Naive thymus-derived CD8-positive, alpha-beta T cell (primary cell): ENCODE measurements at regions of chr2 and their contacts with region 1.

Region 1: GRCh38 chr2:99337113-99338028 is at the start of gene EIF5B:
- DNase-seq: peak; percentile 80 to 96 (median 86)
- ATAC-seq: peak; percentile 69 to 78
- H3K4me3 Mint-ChIP-seq: no peak within 1 kb of the TSS
- H3K27ac Mint-ChIP-seq: no peak within 1 kb of the TSS
- H3K4me1 Mint-ChIP-seq: peaks cover 16 to 59% (median 45%) of the 10 kb centered on the region in 4 donors
- H3K27me3 Mint-ChIP-seq: no peaks in the 10 kb centered on the region
- polyA plus RNA-seq, gene EIF5B: 3.0 to 12.6 (median 5.9) TPM

Region 2: DNA sequence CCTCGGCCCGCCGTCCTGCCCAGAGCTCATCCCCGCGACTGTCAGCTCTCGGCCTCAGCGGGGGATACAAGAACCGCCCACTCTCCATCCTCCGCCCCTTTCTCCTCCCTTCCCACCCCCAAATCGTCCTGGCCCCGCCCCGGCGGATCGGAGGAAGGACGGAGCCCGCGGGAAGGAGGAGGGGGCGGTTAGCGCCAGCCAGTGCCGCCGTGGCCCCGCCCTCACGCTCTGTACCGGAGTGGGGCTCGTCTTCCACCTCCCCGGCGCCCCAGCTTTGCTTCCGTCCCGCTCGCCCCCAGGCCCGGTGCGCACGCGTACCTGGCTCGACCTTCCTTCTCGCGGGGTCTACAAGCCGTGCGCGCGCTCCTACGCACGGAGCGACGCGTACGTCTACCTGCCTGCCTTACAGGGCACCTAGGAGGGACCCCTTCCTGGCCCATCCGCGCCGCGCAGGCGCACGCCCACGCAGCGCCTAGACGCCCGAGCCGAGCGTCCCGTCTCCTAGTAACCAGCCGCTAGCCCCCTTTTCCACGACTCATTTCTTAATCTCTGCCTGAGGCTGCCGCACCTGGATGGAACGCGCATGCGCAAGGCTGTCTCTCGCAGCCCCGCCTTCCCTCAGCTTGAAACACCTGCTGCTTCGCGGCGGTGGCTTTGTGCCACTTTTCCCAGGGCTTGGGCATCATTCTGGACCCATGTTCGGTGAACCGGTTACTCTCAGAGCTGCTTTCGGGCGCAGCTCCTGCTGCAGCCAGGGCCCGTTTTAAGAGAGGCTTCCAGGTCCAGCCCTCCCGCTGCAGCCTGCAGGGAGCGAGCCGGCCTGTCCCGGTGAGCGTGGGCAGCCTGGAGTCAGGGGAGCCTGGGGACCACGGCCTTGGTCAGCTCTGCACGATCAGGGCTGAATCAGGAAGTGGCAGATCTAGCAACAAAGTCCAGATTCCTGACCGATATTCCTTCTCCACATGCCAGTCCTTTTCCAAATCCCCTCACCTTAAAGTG is 196.0 kb before region 1 on chr2 and contains the start of gene C2orf15:
- POLR2A ChIA-PET with region 1: interaction called, 25 read pairs
- DNase-seq: peak; percentile 94 to 98 (median 98)
- ATAC-seq: peak; percentile 86 to 89
- H3K4me3 Mint-ChIP-seq: peak within 1 kb of the TSS; percentile 92 to 99 (median 97)
- H3K27ac Mint-ChIP-seq: peak within 1 kb of the TSS; percentile 96 to 99 (median 99)
- H3K4me1 Mint-ChIP-seq: peaks cover 10 to 29% (median 26%) of the 10 kb centered on the region in 4 donors
- H3K27me3 Mint-ChIP-seq: no peaks in the 10 kb centered on the region
- polyA plus RNA-seq, gene C2orf15: 6.1 to 6.8 (median 6.7) TPM

Region 3: GRCh38 chr2:99154643-99155536 is 182.5 kb before region 1 on chr2 and contains the starts of genes LIPT1 and TSGA10:
- POLR2A ChIA-PET with region 1: interaction called, 23 read pairs
- DNase-seq: peak; percentile 89 to 96 (median 92)
- ATAC-seq: peak; percentile 91 to 92
- H3K4me3 Mint-ChIP-seq: peak within 1 kb of the TSS in 3 of 10 donors; percentile 88 to 94 (median 89)
- H3K27ac Mint-ChIP-seq: peak within 1 kb of the TSS in 1 of 10 donors; percentile 96
- H3K4me1 Mint-ChIP-seq: peaks cover 14 to 41% (median 24%) of the 10 kb centered on the region in 4 donors
- H3K27me3 Mint-ChIP-seq: no peaks in the 10 kb centered on the region
- polyA plus RNA-seq, gene LIPT1: 19.0 to 26.9 (median 22.0) TPM
- polyA plus RNA-seq, gene TSGA10: 22.5 to 26.4 (median 24.1) TPM

Region 4: GRCh38 chr2:99180755-99181623 is 156.4 kb before region 1 on chr2 and contains the starts of genes MITD1 and MRPL30:
- POLR2A ChIA-PET with region 1: interaction called, 24 read pairs
- DNase-seq: peak; percentile 77 to 94 (median 92)
- ATAC-seq: peak; percentile 94 to 96
- H3K4me3 Mint-ChIP-seq: peak within 1 kb of the TSS; percentile 92 to 100 (median 99)
- H3K27ac Mint-ChIP-seq: peak within 1 kb of the TSS; percentile 99 to 100 (median 99)
- H3K4me1 Mint-ChIP-seq: peaks cover 32 to 73% (median 66%) of the 10 kb centered on the region in 4 donors
- H3K27me3 Mint-ChIP-seq: no peaks in the 10 kb centered on the region
- polyA plus RNA-seq, gene MITD1: 40.4 to 49.0 (median 43.8) TPM
- polyA plus RNA-seq, gene MRPL30: 19.1 to 23.5 (median 20.4) TPM

Region 5: DNA sequence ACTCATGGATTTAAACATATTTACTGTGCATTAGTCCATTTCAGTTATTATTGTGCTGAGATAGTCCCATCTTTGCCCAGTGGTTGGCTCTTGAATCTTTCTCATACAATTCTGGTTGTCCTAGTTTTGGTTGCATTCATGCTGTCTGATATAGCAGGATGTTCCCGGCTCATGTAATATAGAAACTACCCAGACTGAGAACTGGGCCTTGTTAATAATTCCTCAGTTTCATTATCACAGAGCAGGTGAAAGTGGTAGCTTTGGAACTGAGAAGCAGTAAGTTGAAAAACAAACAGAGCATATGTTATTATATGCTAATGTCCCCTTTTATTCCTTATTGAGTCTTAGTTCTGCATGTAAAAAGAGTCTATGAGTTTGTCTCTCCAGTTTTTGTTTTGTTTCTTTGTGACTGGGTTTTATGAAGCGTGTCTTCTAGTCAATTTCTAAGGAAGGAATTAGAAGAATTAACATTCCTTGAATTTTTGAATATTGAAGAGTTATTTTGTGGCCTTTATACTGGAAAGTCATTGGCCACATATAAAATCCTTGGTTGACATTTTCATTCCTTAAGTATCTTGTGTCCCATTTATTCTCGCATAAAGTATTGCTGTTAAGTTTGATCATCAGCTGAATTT is 43.1 kb after region 1 on chr2:
- POLR2A ChIA-PET with region 1: no interaction called
- DNase-seq: no peak
- ATAC-seq: no peak
- H3K4me3 Mint-ChIP-seq: no peak overlapping the region
- H3K27ac Mint-ChIP-seq: peak overlapping the region in 5 of 10 donors; percentile 2 to 24 (median 14)
- H3K4me1 Mint-ChIP-seq: peaks cover 0 to 2% (median 0%) of the 10 kb centered on the region in 4 donors
- H3K27me3 Mint-ChIP-seq: no peaks in the 10 kb centered on the region

Region 6: DNA sequence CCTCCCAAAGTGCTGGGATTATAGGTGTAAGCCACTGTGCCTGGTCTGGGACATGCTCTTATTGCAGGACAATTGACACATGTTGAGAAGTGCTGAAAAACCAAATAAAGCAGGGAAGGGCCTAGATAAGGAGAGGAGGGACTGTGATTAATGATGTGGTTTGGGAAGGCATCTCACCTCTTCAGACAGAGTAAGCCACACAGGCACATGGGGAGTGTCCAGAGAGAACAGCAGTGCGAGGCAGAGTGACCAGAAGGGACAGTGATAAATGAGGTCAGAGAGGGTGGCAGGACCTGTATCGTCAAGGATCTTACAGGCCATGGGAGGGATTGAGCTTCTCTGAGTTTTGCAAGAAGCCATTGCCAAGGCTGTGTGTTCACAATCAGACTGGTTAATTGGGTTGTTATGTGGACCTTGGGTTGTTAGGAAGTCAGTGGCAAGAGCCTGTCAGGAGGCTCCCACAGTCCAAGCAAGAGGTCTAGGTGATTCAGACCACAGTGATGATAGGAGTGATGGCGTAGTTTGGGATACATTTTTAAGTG is 58.3 kb after region 1 on chr2:
- POLR2A ChIA-PET with region 1: no interaction called
- DNase-seq: no peak
- ATAC-seq: no peak
- H3K4me3 Mint-ChIP-seq: no peak overlapping the region
- H3K27ac Mint-ChIP-seq: peak overlapping the region in 9 of 10 donors; percentile 34 to 89 (median 58)
- H3K4me1 Mint-ChIP-seq: no peaks in the 10 kb centered on the region
- H3K27me3 Mint-ChIP-seq: no peaks in the 10 kb centered on the region

Region 7: DNA sequence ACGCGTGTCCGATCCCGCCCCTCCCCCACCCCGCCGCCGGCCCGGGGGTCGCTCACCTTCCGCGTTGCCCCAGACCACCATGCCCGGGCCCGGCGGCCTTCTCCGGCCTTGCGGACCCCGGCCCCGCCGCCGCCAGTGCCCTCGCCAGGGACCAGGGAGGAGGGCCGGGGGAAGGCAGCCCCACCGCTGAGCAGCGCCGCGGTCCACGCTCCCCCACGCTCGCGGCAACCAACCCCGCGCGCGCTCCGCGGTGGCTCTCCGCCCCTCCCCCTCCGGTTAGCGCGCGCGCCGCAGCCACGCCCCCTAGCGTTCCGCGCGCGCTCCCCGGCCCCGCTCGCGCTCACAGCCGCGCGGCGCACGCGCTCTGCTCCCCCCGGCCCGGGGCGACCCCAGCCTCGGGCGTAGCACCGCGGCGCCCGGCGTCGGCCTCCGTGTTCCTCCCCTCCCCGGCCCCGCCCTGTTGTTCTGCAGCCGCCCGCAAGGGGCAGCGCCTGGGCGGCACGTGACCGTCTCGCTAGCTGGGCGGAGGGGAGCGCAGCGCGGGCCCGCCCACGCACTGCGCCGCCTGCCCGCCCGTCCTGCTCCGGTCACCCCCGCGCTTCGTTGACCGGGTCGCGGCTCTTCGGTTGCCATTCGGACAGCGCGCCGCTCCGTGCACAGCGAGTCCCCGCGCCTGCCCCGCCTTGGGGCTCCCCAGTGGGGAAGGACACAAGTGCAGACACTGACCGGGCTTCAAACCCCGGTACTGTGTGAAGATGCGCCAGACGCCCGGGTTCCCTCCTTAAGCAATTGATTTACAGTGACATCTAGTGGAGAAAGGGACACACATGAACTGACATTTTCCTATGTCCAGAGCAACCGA is 152.6 kb after region 1 on chr2 and contains the start of gene REV1:
- POLR2A ChIA-PET with region 1: interaction called, 12 read pairs
- DNase-seq: peak; percentile 92 to 99 (median 95)
- ATAC-seq: peak; percentile 80 to 87
- H3K4me3 Mint-ChIP-seq: peak within 1 kb of the TSS; percentile 95 to 100 (median 98)
- H3K27ac Mint-ChIP-seq: peak within 1 kb of the TSS; percentile 95 to 100 (median 99)
- H3K4me1 Mint-ChIP-seq: peaks cover 20 to 44% (median 41%) of the 10 kb centered on the region in 4 donors
- H3K27me3 Mint-ChIP-seq: peaks cover 0 to 2% (median 0%) of the 10 kb centered on the region in 5 donors
- polyA plus RNA-seq, gene REV1: 13.0 to 28.1 (median 18.0) TPM